Activated B cell treated with CpG ODN at 0.5 μM for 24 hours (primary cell): ENCODE measurements at regions of chr3 and their contacts with region 1.

Region 1: DNA sequence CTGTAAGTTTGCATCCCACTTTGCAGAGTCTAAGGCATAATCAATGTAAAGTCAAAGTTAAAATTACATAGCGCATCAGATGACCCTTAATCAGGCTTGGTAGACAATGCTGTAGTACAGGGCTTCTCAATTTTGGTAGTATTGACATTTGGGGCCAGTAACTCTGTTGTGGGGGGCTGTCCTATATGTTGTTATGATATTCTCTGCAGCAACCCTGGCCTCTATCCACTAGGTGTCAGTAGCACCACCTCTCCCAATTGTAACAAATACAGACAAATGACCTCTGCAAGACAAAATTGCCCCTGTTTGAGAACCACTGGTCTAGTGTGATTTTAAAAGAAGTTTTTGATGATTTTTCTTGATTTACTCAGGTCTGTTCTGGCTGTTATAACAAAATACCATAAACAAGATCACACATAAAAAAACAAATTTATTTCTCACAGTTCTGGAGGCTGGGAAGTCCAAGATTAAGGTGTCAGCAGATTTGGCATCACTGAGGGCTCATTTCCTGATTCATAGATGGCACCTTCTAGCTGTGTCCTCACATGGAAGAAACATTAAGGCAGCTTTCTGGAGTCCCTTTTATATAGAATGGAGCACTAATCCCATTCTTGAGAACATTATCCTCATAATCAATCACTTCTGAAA is 37.6 kb upstream of the SLC9A9 start:
- DNase-seq: no peak
- ATAC-seq: peak; percentile 82
- H3K4me3 Mint-ChIP-seq: no peak overlapping the region
- H3K27ac Mint-ChIP-seq: no peak overlapping the region
- H3K4me1 Mint-ChIP-seq: no peaks in the 10 kb centered on the region
- H3K27me3 Mint-ChIP-seq: peaks cover 2% of the 10 kb centered on the region
- CTCF ChIP-seq: no peak

Region 2: GRCh38 chr3:143775459-143775858 is 110.4 kb before region 1 on chr3:
- CTCF ChIA-PET with region 1: interaction called, 5 read pairs
- POLR2A ChIA-PET with region 1: no interaction called
- intact Hi-C with region 1: loop called (anchors 1 kb)
- DNase-seq: no peak
- ATAC-seq: peak; percentile 70
- H3K4me3 Mint-ChIP-seq: no peak overlapping the region
- H3K27ac Mint-ChIP-seq: no peak overlapping the region
- H3K4me1 Mint-ChIP-seq: peaks cover 3% of the 10 kb centered on the region
- H3K27me3 Mint-ChIP-seq: no peaks in the 10 kb centered on the region
- CTCF ChIP-seq: no peak

Region 3: DNA sequence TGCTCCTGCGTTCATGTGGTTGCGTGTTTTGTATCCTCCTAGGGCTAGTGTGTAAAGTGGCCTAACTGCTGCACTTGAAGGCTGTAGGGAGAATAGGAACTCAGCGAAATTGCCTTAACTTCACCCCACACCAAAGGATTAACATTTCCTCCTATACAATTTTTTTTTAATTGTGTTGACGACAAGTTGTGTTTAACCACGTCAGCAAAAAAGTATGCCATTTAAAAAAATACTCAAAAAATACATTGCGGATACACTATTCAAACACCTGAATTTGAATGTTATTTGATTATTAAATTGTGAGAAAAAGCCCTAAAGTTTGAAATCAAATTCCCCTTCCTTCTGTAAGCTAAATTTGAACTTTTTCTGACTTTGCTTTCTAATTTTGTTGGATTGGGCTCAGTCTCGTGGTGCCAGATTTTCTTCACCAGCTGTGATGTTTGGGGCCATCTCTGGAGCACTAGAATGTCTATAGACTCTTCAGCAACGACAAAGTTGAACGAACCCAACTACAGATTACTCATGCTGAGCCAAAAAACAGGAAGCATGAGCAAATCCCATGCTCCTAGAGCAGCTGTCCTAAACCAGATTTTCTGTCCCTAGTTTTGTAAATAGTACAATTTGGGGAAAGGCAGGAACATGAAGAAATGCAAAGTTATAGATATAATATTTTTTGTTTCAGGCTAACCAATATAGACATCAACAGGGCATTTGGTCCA is 29.5 kb before region 1 on chr3:
- CTCF ChIA-PET with region 1: interaction called, 10 read pairs
- POLR2A ChIA-PET with region 1: no interaction called
- intact Hi-C with region 1: no loop called
- DNase-seq: no peak
- ATAC-seq: no peak
- H3K4me3 Mint-ChIP-seq: no peak overlapping the region
- H3K27ac Mint-ChIP-seq: no peak overlapping the region
- H3K4me1 Mint-ChIP-seq: no peaks in the 10 kb centered on the region
- H3K27me3 Mint-ChIP-seq: peaks cover 4% of the 10 kb centered on the region
- CTCF ChIP-seq: no peak